ENCODE measurements at regions of chr7 and their contacts with region 1.

Region 1: GRCh38 chr7:37833107-37833817 is 15.1 kb upstream of the NME8 start:
- DNase-seq: peak in 1 of 2 donors; percentile 5
- ATAC-seq: no peak
- H3K4me3 ChIP-seq: peak overlapping the region; percentile 23 to 41 (median 37)
- H3K27ac ChIP-seq: no peak overlapping the region
- H3K4me1 ChIP-seq: no peaks in the 10 kb centered on the region
- H3K27me3 ChIP-seq: no peaks in the 10 kb centered on the region
- CTCF ChIP-seq: peak in 4 of 5 experiments; percentile 26 to 68 (median 54)
- POLR2A ChIP-seq: no peak

Region 2: DNA sequence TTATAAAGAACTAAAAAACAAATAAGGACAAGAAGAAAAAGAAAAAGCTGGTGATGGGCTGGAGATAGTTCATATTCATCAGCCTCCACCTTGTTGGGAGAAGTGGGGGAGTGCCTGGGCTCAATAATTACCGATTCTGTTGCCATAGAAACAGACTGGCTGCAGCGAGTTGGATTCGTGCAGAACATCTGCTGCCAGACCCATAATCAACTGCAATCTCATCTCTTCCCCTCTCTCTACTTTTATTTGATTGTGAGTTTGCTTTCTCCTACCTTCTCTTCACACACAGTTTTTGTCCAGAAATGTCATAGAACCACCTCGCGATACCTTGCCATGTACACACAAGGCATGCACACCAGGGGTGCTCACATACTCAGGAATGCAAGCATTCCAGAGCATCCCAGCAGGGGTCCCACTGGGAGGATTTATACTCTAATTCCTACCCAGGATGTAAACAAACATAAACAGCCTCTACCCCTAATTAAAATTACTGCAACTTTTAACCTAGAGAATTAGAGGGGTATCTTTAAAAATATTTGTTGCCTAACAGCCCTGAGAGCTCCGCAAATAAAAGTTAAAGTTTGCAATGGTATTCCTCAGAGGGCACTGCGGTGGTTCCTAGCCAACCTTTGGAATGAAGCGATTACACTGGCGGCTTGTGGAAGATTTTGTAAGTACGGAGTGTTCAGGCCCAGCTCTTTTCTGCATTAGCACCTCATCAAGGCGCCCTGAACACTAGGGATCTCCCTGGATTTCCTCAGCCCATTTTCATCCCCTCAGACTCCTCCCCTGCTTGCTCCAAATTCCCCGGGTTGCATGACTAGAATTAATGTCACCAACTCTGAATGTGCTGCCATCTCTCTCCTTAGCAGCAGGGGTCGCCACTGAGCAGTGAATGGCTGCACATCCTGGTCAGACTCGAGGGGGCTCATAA is 846.6 kb before region 1 on chr7:
- in situ Hi-C with region 1: loop called in 1 of 4 experiments (anchors 25 kb)
- intact Hi-C with region 1: no loop called
- DNase-seq: peak; percentile 5 to 44
- ATAC-seq: peak; percentile 47 to 51
- H3K4me3 ChIP-seq: no peak overlapping the region
- H3K27ac ChIP-seq: no peak overlapping the region
- H3K4me1 ChIP-seq: peaks cover 0 to 4% of the 10 kb centered on the region in 2 donors
- H3K27me3 ChIP-seq: no peaks in the 10 kb centered on the region
- CTCF ChIP-seq: peak; percentile 70 to 78 (median 74)
- POLR2A ChIP-seq: no peak

Region 3: GRCh38 chr7:37510043-37510634 is 323.1 kb before region 1 on chr7:
- in situ Hi-C with region 1: loop called in 1 of 4 experiments (anchors 25 kb)
- intact Hi-C with region 1: no loop called
- DNase-seq: no peak
- ATAC-seq: no peak
- H3K4me3 ChIP-seq: no peak overlapping the region
- H3K27ac ChIP-seq: no peak overlapping the region
- H3K4me1 ChIP-seq: no peaks in the 10 kb centered on the region
- H3K27me3 ChIP-seq: no peaks in the 10 kb centered on the region
- CTCF ChIP-seq: peak in 3 of 5 experiments; percentile 34 to 51 (median 45)
- POLR2A ChIP-seq: no peak

Measured in gastrocnemius medialis (tissue), 4 donors.